ENCODE measurements at regions of chrX and their contacts with region 1.

Region 1: GRCh38 chrX:49725923-49726904 is 30.4 kb upstream of the PAGE1 start:
- DNase-seq: no peak
- ATAC-seq: no peak
- H3K4me3 ChIP-seq: no peak overlapping the region
- H3K4me1 ChIP-seq: no peaks in the 10 kb centered on the region
- CTCF ChIP-seq: no peak

Region 2: GRCh38 chrX:49661881-49662280 is 64.3 kb before region 1 on chrX:
- intact Hi-C with region 1: loop called in 1 of 2 experiments (anchors 10 kb)
- DNase-seq: no peak
- ATAC-seq: no peak
- H3K4me3 ChIP-seq: no peak overlapping the region
- H3K4me1 ChIP-seq: no peaks in the 10 kb centered on the region
- CTCF ChIP-seq: no peak

Measured in mucosa of descending colon (tissue), 3 donors.